Esophagus squamous epithelium (tissue), 5 donors: ENCODE measurements at regions of chr2 and their contacts with region 1.

Region 1: DNA sequence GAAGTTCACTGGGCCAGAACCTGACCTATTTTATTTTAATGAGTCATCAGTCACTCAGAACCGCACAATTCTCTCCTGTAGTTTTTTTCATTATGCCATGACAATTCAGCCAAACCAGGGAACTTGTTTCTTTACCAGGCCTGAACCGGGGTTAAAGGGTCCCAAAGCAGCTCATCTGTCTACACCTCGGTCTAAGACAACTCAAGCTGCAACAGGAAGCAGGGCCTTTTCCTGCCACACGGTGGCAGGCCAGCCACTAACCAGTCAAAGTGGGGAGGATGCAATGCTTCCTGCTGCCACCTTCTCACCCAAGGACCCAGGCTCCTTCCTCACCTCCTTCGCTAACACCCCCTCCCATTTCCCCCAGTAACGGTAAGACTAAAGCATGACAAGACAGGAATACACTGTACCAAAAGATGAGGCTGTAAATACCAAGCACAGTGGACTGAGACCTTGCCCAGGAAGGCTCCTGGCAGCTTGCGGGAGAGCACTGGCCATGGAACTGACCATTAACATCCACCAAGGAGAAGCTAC is 56.7 kb upstream of the ACKR3 start:
- DNase-seq: no peak
- H3K4me3 ChIP-seq: no peak overlapping the region
- H3K27ac ChIP-seq: no peak overlapping the region
- H3K4me1 ChIP-seq: peaks cover 0 to 10% (median 0%) of the 10 kb centered on the region in 3 donors
- H3K27me3 ChIP-seq: peaks cover 0 to 5% (median 0%) of the 10 kb centered on the region in 4 donors
- CTCF ChIP-seq: peak; percentile 64 to 93 (median 88)
- POLR2A ChIP-seq: no peak

Region 2: GRCh38 chr2:235864733-235865515 is 648.0 kb before region 1 on chr2:
- intact Hi-C with region 1: no loop called
- DNase-seq: no peak
- H3K4me3 ChIP-seq: no peak overlapping the region
- H3K27ac ChIP-seq: no peak overlapping the region
- H3K4me1 ChIP-seq: no peaks in the 10 kb centered on the region
- H3K27me3 ChIP-seq: no peaks in the 10 kb centered on the region
- CTCF ChIP-seq: no peak
- POLR2A ChIP-seq: no peak

Region 3: DNA sequence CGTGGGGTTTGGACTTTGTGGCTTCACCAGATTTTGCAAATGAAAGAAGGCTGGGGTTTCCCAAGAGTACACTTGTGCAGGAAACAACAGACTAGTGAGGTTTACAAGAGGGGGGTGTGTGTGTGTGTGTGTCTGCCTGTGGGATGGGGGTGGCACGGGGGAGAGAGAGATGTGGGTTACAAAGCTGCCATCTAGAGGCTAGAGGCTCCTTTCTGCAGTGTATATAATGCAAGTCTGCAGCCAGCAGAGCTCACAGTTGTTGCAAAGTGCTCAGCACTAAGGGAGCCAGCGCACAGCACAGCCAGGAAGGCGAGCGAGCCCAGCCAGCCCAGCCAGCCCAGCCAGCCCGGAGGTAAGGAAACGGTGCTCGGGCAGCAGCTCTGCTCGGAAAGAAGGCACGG is 56.6 kb after region 1 on chr2 and contains the start of gene ACKR3:
- intact Hi-C with region 1: loop called (anchors 5 kb)
- DNase-seq: peak; percentile 51
- H3K4me3 ChIP-seq: peak within 1 kb of the TSS; percentile 32 to 69 (median 50)
- H3K27ac ChIP-seq: peak within 1 kb of the TSS; percentile 78 to 95 (median 89)
- H3K4me1 ChIP-seq: peaks cover 32 to 78% (median 32%) of the 10 kb centered on the region in 3 donors
- H3K27me3 ChIP-seq: peaks cover 0 to 5% (median 0%) of the 10 kb centered on the region in 4 donors
- CTCF ChIP-seq: peak; percentile 28 to 57 (median 40)
- POLR2A ChIP-seq: peak in 3 of 4 donors; percentile 21 to 67 (median 61)
- total RNA-seq, gene ACKR3: 5.9 to 29.5 (median 24.5) TPM

Region 4: GRCh38 chr2:237026981-237027711 is 514.2 kb after region 1 on chr2:
- intact Hi-C with region 1: loop called (anchors 10 kb)
- DNase-seq: no peak
- H3K4me3 ChIP-seq: no peak overlapping the region
- H3K27ac ChIP-seq: no peak overlapping the region
- H3K4me1 ChIP-seq: peaks cover 0 to 7% (median 0%) of the 10 kb centered on the region in 3 donors
- H3K27me3 ChIP-seq: no peaks in the 10 kb centered on the region
- CTCF ChIP-seq: peak; percentile 51 to 97 (median 85)
- POLR2A ChIP-seq: no peak